Gastrocnemius medialis (tissue), 4 donors: ENCODE measurements at regions of chr2 and their contacts with region 1.

Region 1: GRCh38 chr2:128090945-128091725 is at the start of gene UGGT1:
- DNase-seq: peak; percentile 94 to 95
- ATAC-seq: peak; percentile 99
- H3K4me3 ChIP-seq: peak within 1 kb of the TSS; percentile 86 to 99 (median 92)
- H3K27ac ChIP-seq: peak within 1 kb of the TSS; percentile 83 to 95 (median 86)
- H3K4me1 ChIP-seq: peaks cover 7 to 10% of the 10 kb centered on the region in 2 donors
- H3K27me3 ChIP-seq: no peaks in the 10 kb centered on the region
- CTCF ChIP-seq: no peak
- POLR2A ChIP-seq: peak; percentile 72 to 83
- total RNA-seq, gene UGGT1: 35.1 to 51.7 (median 45.2) TPM

Region 2: DNA sequence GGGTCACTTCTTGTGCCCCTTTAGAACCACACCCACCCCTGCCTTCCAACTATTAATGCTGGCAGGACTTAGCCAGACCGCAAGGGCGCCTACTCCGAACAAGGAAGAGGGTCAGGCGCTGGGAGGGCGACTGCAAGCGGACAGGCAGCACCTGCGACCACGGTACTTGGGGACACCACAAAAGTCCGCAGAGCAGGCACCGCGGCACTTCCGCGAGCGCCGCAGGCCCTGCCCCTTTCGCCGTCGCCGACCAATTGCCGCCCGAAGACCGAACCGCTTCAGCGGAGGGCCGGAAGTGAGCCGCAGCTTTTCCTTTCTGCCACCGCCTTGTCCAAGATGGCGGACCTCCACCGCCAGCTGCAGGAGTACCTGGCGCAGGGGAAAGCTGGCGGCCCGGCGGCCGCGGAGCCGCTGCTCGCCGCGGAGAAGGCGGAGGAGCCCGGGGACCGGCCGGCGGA is 389.9 kb before region 1 on chr2 and contains the start of gene SFT2D3:
- in situ Hi-C with region 1: no loop called
- intact Hi-C with region 1: no loop called
- DNase-seq: peak; percentile 90
- ATAC-seq: peak; percentile 82 to 84
- H3K4me3 ChIP-seq: peak within 1 kb of the TSS; percentile 60 to 72 (median 68)
- H3K27ac ChIP-seq: peak within 1 kb of the TSS; percentile 92 to 95 (median 95)
- H3K4me1 ChIP-seq: peaks cover 36% of the 10 kb centered on the region in 2 donors
- H3K27me3 ChIP-seq: no peaks in the 10 kb centered on the region
- CTCF ChIP-seq: no peak
- POLR2A ChIP-seq: peak; percentile 84 to 87
- total RNA-seq, gene SFT2D3: 3.0 to 5.5 (median 3.5) TPM

Region 3: DNA sequence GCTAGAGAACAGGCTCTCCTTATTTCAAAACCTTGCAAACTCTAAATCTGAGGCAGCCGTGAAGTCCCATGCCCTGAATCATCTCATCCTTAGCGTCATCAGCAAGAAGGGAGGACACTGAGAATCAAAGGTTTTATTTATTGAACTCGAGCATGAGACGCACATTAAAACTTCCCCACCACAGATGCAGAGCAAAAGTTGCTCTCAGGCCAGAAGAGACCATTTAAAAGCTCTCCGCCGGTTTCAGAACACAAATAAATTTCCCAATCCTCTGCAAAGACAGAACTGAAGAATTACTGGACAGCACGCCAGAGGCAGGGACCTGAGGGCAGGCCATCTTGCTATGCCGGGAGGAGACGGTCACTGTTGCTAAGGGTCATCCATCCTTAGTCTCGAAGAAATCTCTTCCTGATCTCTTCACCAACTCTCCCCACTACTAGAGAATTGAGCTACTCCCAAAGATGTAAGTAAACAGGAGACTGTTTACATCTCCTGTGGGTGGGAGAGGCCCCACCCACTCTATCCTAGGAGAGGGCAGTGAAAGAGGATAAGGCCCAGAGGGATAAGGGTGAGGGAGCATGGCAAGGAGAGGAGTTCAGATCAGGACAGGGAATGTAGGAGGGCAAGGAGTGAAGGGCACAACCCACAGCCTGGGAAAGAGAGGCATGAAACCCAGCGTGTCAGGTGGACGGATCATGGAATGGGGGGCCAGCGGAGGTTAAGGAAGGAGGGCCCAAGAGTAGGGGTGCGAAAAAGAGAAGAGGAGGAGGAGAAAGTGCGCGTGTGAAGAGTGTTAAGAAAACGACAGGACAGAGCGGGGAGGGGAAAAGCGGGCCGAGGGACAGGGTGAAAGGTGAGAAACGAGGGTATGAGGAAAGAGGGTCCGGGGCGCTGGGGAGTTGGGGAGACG is 206.4 kb before region 1 on chr2:
- in situ Hi-C with region 1: loop called in 3 of 4 experiments (anchors 10 kb)
- intact Hi-C with region 1: loop called (anchors 5 kb)
- DNase-seq: no peak
- ATAC-seq: no peak
- H3K4me3 ChIP-seq: peak overlapping the region; percentile 57 to 86 (median 68)
- H3K27ac ChIP-seq: peak overlapping the region; percentile 89 to 96 (median 92)
- H3K4me1 ChIP-seq: peaks cover 35 to 43% of the 10 kb centered on the region in 2 donors
- H3K27me3 ChIP-seq: no peaks in the 10 kb centered on the region
- CTCF ChIP-seq: no peak
- POLR2A ChIP-seq: no peak

Region 4: DNA sequence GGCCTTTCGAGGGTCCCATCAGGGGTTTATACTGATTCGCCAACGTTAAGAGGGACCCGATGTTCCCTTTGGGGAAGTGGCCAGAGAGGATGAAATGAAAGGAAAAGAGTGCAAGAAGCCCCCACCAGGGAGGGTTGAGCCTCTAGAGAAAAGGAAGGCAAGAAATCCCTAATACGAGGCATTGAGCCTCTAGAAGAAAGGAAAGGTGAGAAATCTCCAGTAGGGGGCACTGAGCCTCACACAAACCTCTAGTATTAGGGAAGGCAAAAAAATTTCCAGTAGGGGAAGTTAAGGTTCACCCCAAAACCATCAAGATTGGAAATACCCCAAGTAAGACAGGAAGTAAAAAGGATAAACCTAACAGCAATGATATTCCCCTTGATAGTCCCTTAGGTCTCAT is 53.5 kb before region 1 on chr2:
- in situ Hi-C with region 1: loop called in 2 of 4 experiments (anchors 5 to 10 kb)
- intact Hi-C with region 1: no loop called
- DNase-seq: no peak
- ATAC-seq: no peak
- H3K4me3 ChIP-seq: no peak overlapping the region
- H3K27ac ChIP-seq: no peak overlapping the region
- H3K4me1 ChIP-seq: no peaks in the 10 kb centered on the region
- H3K27me3 ChIP-seq: no peaks in the 10 kb centered on the region
- CTCF ChIP-seq: no peak
- POLR2A ChIP-seq: no peak

Region 5: GRCh38 chr2:128187032-128187654 is 96.0 kb after region 1 on chr2:
- in situ Hi-C with region 1: no loop called
- intact Hi-C with region 1: no loop called
- DNase-seq: peak; percentile 66 to 75
- ATAC-seq: peak; percentile 98
- H3K4me3 ChIP-seq: peak overlapping the region; percentile 38 to 54 (median 52)
- H3K27ac ChIP-seq: peak overlapping the region; percentile 84 to 92 (median 86)
- H3K4me1 ChIP-seq: peaks cover 7 to 18% of the 10 kb centered on the region in 2 donors
- H3K27me3 ChIP-seq: no peaks in the 10 kb centered on the region
- CTCF ChIP-seq: no peak
- POLR2A ChIP-seq: peak; percentile 19 to 37

Region 6: DNA sequence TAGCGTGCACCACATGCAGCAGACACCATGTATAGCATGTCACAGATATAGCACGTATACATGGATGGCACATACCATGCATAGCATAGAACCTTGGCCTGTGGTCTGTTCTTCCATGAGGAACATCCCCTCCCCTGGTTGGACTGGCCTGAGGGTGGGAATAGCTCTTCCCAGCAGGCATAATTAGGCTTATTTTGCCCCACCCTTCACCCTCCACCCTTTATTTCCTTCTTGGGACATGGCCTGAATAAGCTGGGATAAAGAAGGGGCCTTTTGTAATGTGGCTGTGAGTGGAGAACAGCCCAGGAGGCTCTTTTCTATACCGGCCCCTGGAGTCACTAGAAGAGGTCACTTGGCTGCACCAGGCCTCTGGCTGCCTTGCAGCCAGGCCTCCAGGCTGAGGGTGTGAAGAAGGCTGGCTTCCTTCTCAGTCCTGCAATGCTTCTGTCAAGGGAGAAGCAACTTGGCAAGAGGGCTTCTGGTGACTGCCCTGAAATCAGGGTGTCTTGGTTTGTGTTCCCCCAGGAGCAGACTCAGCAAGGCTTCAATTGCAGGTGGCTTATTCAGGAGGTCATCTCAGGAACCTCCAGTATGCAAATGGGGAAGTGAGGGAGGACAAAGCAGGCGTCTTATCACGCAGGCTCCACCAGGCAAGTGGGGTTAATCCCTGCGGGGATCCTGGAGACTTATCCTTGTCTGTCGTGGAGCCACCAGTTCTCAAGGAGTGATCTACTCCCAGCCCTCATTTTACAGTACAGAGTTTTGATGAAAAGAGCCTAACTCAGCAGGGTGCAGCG is 159.3 kb after region 1 on chr2:
- in situ Hi-C with region 1: no loop called
- intact Hi-C with region 1: no loop called
- DNase-seq: no peak
- ATAC-seq: no peak
- H3K4me3 ChIP-seq: no peak overlapping the region
- H3K27ac ChIP-seq: no peak overlapping the region
- H3K4me1 ChIP-seq: no peaks in the 10 kb centered on the region
- H3K27me3 ChIP-seq: no peaks in the 10 kb centered on the region
- CTCF ChIP-seq: no peak
- POLR2A ChIP-seq: no peak